Caco-2 (cell line): ENCODE measurements at regions of chr4 and their contacts with region 1.

Region 1: DNA sequence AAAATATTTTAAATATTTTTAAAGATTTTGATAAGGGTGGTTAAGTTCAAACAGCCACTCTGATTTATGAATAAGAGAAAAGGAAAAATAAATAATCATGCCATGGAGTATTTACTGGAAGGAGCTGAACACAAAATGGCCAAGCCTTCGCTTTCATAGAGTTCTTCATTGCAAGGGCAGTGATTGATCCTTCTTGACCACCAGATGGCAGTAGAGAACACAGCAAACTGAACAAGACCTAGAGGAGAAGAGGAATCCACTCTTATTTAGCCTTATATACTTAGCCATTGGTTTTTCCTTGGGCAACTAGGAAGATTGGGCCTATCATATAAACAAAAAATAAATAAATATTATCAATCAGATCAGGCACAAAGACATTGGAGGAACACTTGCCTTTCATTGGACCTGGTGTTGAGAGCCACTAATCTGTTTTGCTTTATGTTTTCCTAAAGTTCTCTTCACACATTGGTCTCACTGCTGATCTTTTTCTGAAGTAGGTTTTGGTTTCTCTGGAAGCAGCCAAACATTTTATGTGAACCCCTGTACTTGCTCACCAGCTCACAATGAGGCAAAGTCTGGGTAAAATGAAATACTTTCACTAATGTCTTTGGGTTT is 58.1 kb upstream of the PARM1 start:
- DNase-seq: peak; percentile 35 to 58
- H3K4me3 ChIP-seq: no peak overlapping the region
- H3K4me3 Mint-ChIP-seq: no peak overlapping the region
- H3K27ac Mint-ChIP-seq: no peak overlapping the region
- H3K4me1 ChIP-seq: no peaks in the 10 kb centered on the region
- H3K4me1 Mint-ChIP-seq: no peaks in the 10 kb centered on the region
- H3K27me3 ChIP-seq: no peaks in the 10 kb centered on the region
- H3K27me3 Mint-ChIP-seq: peaks cover 7% of the 10 kb centered on the region
- CTCF ChIP-seq: peak; percentile 73 to 83

Region 2: GRCh38 chr4:75289914-75290582 is 415.2 kb after region 1 on chr4:
- CTCF ChIA-PET with region 1: no interaction called
- POLR2A ChIA-PET with region 1: no interaction called
- intact Hi-C with region 1: loop called (anchors 1 kb)
- DNase-seq: peak in 1 of 2 experiments; percentile 25
- H3K4me3 ChIP-seq: no peak overlapping the region
- H3K4me3 Mint-ChIP-seq: no peak overlapping the region
- H3K27ac Mint-ChIP-seq: no peak overlapping the region
- H3K4me1 ChIP-seq: peaks cover 8% of the 10 kb centered on the region; the same call in 1 of the 2 replicates
- H3K4me1 Mint-ChIP-seq: peaks cover 15% of the 10 kb centered on the region
- H3K27me3 ChIP-seq: no peaks in the 10 kb centered on the region
- H3K27me3 Mint-ChIP-seq: no peaks in the 10 kb centered on the region
- CTCF ChIP-seq: peak in 1 of 2 experiments; percentile 30

Region 3: DNA sequence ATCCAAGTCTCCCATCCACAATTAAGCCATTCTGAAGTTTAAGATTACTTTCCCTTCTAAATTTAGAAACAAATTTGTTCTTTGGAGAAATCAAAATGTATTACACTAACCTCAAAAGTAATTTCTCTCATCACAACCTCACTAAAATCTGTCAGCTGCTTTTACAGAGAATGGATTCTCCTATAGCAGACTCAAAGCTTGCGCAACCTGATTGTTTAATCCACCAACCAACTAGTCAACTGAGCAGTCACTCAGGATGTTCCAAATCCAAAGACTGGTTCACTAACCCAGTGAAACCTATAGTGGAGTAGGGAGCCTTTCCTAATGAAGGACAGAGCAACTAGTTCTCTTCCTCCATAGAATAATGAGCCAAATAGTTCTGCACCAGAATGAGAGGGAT is 595.0 kb after region 1 on chr4:
- CTCF ChIA-PET with region 1: interaction called, 6 read pairs
- POLR2A ChIA-PET with region 1: no interaction called
- intact Hi-C with region 1: loop called (anchors 2 kb)
- DNase-seq: no peak
- H3K4me3 ChIP-seq: no peak overlapping the region
- H3K4me3 Mint-ChIP-seq: no peak overlapping the region
- H3K27ac Mint-ChIP-seq: no peak overlapping the region
- H3K4me1 ChIP-seq: no peaks in the 10 kb centered on the region
- H3K4me1 Mint-ChIP-seq: no peaks in the 10 kb centered on the region
- H3K27me3 ChIP-seq: no peaks in the 10 kb centered on the region
- H3K27me3 Mint-ChIP-seq: no peaks in the 10 kb centered on the region
- CTCF ChIP-seq: no peak